Right lobe of liver (tissue), 6 donors: ENCODE measurements at regions of chr7 and their contacts with region 1.

Region 1: GRCh38 chr7:27160546-27161213 is 4.2 kb upstream of the HOXA7 start:
- DNase-seq: peak; percentile 80 to 87 (median 83)
- ATAC-seq: peak; percentile 88 to 93 (median 92)
- H3K4me3 ChIP-seq: peak overlapping the region; percentile 32 to 60 (median 57)
- H3K27ac ChIP-seq: no peak overlapping the region
- H3K4me1 ChIP-seq: peaks cover 0 to 15% (median 4%) of the 10 kb centered on the region in 4 donors
- H3K27me3 ChIP-seq: peaks cover 21 to 48% of the 10 kb centered on the region in 2 donors
- CTCF ChIP-seq: peak in 3 of 4 donors; percentile 99 to 100 (median 99)
- POLR2A ChIP-seq: no peak

Region 2: GRCh38 chr7:26675143-26675887 is 485.4 kb before region 1 on chr7:
- intact Hi-C with region 1: loop called in 1 of 2 experiments (anchors 5 kb)
- DNase-seq: no peak
- ATAC-seq: no peak
- H3K4me3 ChIP-seq: no peak overlapping the region
- H3K27ac ChIP-seq: no peak overlapping the region
- H3K4me1 ChIP-seq: no peaks in the 10 kb centered on the region
- H3K27me3 ChIP-seq: no peaks in the 10 kb centered on the region
- CTCF ChIP-seq: no peak
- POLR2A ChIP-seq: no peak

Region 3: DNA sequence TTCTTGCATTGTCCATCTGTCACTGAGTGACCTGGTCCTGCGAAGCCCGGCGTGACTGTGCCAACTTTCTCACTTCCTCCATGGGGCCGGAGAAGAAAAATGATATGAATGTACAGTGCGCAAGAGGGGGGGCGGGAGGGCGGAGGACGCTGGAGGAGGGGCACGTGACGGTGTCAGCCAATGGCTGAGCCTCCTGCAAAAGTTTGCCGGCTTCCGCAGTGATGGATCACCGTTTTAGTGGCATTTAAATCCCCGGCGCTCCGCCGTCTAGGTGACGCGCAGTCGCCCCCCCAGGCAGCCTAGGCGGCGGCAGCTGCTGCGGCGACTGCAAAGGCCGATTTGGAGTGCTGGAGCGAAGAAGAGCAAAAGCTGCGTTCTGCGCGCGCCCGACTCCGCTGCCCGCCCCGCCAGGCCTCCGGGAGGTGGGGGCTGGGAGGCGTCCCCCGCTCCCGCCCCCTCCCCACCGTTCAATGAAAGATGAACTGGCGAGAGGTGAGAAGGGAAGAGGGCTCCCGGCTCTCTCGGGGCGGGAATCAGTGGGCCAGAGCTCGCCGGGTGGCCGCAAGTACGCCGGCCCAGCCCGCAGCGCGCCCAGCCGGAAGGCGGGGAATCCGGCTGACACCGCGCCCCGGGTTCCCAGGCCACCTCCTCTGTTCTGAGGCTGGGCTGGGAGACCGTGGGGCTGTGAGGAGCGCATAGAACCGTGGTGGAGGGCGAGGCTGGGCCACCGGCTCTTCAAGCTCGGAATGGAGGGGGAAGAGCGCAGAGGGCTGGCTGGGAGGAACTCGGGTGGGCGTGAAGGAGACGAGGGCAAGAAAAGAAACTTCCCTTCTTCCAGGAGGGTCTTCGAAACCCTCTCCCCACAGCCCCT is 64.5 kb before region 1 on chr7 and contains the start of gene HOXA1:
- intact Hi-C with region 1: loop called in 1 of 2 experiments (anchors 10 kb)
- DNase-seq: peak; percentile 77 to 79 (median 79)
- ATAC-seq: peak; percentile 69 to 77 (median 74)
- H3K4me3 ChIP-seq: peak within 1 kb of the TSS; percentile 51 to 58 (median 52)
- H3K27ac ChIP-seq: peak within 1 kb of the TSS; percentile 79 to 94 (median 80)
- H3K4me1 ChIP-seq: no peaks in the 10 kb centered on the region
- H3K27me3 ChIP-seq: peaks cover 0 to 23% of the 10 kb centered on the region in 2 donors
- CTCF ChIP-seq: no peak
- POLR2A ChIP-seq: peak; percentile 65
- total RNA-seq, gene HOXA1: 0.09 to 0.31 (median 0.17) TPM in 5 of 6 experiments, not detected in the other